ENCODE measurements at regions of chr12 and their contacts with region 1.

Region 1: DNA sequence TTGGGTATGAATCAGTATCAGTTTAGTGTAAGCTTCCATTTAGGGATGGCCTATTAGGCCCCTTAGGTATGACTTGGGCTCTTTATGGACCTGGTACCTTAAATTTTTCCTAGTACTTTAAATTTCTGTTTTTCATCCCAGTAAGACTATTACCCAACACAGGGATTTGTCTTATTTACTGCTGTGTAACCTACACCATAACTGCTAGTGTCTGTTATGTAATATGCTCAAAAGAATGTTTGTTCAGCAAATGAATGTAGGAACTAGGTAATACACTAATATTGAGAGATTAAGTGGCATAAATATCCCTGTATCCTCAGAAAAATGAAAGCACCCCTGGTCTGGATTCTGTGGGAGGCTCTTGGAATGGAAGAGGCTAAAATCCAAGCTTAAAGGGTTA is 63.7 kb upstream of the YARS2 start:
- DNase-seq: no peak
- H3K4me3 ChIP-seq: no peak overlapping the region
- H3K27ac ChIP-seq: no peak overlapping the region
- H3K4me1 ChIP-seq: no peaks in the 10 kb centered on the region
- CTCF ChIP-seq: no peak

Region 2: GRCh38 chr12:32801269-32801980 is 18.0 kb before region 1 on chr12:
- CTCF ChIA-PET with region 1: no interaction called
- POLR2A ChIA-PET with region 1: no interaction called
- intact Hi-C with region 1: no loop called
- DNase-seq: no peak
- H3K4me3 ChIP-seq: no peak overlapping the region
- H3K27ac ChIP-seq: no peak overlapping the region
- H3K4me1 ChIP-seq: no peaks in the 10 kb centered on the region
- CTCF ChIP-seq: no peak

Region 3: DNA sequence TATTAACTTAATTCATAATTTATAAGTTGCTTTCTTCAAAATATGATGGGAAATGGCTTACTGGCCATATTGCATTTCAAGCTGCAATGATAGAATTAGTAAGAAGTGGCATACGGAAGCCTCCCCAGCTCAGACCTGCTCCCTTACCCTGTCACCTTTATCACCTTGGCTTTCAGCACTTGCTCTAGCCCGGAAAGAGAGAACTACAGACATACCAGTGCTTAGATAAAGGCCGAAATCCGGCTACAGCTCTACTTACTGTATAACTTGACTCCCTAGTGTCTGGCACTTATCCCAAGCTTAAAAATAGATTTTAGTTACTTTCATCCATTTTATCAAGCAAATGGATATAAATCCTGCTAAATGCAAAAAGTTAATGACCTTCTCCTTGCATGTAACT is 34.7 kb after region 1 on chr12:
- CTCF ChIA-PET with region 1: no interaction called
- POLR2A ChIA-PET with region 1: no interaction called
- intact Hi-C with region 1: loop called (anchors 5 kb)
- DNase-seq: no peak
- H3K4me3 ChIP-seq: no peak overlapping the region
- H3K27ac ChIP-seq: no peak overlapping the region
- H3K4me1 ChIP-seq: no peaks in the 10 kb centered on the region
- CTCF ChIP-seq: no peak

Region 4: DNA sequence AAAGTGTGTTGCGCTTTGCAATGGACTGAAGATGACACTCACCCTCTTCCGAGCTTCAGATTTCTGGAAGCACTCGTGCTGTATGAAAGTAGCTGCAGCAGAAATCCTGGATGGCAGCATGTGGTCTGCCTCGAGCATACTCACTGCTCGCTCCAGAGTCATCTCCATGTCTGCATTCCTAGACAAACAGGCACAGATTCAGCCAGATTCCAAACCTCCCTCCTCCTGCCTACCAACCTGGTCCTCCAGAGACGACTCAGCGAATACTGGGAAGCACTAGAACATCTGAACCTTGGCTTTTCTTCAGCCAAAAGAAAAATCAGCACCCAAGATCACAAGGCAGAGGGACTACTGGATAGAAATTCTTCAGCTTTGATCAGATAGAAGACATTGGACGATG is 49.5 kb after region 1 on chr12:
- CTCF ChIA-PET with region 1: no interaction called
- POLR2A ChIA-PET with region 1: no interaction called
- intact Hi-C with region 1: loop called (anchors 5 kb)
- DNase-seq: no peak
- H3K4me3 ChIP-seq: no peak overlapping the region
- H3K27ac ChIP-seq: no peak overlapping the region
- H3K4me1 ChIP-seq: no peaks in the 10 kb centered on the region
- CTCF ChIP-seq: no peak

Measured in OCI-LY7 (cell line).